ENCODE measurements at regions of chr7 and their contacts with region 1.

Region 1: DNA sequence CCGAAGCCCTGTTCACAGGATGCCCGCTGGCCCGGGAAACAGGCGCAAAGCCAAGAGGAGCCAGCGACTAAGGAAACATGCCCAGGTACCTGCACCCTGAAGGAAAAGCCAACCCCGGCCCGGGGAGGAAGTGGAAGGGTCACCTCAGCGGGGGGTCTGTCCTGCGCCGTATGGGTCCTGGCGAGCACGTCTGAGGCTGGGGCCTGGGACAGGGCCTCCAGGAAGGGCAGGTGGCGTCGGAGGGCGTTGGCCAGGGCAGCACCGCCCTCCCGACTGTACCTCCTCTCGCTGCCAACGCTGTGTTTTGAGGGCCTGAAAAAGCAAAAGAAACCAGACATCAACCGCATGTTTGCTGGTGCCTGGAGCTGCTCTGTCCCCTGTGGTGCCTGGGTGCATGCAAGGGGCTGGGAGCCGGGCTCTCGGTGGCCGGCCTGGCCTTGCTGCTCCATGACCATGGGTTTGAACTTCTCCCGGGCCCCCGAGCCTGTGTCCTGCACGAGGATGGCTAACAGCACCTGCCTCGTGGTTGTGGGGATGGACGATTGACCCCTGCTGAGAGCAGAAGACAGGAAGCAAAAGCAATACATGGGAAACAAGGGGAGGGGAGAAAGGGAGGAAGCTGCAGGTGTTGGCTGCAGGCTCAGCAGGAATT is 395.3 kb downstream of the PTPRN2 start:
- DNase-seq: no peak
- H3K4me3 ChIP-seq: no peak overlapping the region
- H3K27ac ChIP-seq: no peak overlapping the region
- H3K4me1 ChIP-seq: no peaks in the 10 kb centered on the region
- H3K27me3 ChIP-seq: no peaks in the 10 kb centered on the region
- CTCF ChIP-seq: no peak
- POLR2A ChIP-seq: no peak

Region 2: DNA sequence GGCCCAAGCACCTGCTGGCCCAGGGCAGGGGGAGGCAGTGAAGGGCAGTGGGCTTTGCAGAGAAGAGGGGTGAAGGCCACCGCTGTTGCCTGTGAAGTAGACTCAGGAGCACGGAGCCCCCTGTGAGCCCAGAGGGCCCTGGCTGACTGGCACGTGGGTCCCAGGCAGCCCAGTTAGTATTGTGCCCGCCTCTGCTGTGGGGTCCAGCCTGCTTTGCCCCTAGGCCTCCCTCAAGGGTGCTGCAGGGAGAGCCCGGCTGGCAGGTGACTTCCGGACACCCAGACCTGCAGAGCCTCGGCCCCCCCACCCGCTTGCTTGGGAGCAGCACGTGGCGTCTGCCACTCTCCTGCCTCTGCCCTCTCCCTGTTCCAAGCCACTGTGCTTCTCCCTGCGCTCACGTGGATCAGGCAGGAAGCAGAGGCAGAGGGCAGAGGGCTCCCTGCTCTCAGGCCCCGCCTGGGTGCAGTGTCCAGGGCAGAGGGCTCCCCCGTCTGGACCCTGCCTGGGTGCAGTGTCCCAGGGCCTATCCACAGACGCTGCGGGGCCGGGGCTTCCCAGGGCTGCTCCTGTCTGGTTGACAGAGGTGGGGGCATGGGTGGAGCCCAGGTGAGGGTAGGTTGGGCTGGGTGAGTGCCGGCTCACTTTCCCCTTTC is 767.1 kb before region 1 on chr7:
- intact Hi-C with region 1: no loop called
- DNase-seq: no peak
- H3K4me3 ChIP-seq: no peak overlapping the region
- H3K27ac ChIP-seq: no peak overlapping the region
- H3K4me1 ChIP-seq: no peaks in the 10 kb centered on the region
- H3K27me3 ChIP-seq: no peaks in the 10 kb centered on the region
- CTCF ChIP-seq: no peak
- POLR2A ChIP-seq: no peak

Region 3: DNA sequence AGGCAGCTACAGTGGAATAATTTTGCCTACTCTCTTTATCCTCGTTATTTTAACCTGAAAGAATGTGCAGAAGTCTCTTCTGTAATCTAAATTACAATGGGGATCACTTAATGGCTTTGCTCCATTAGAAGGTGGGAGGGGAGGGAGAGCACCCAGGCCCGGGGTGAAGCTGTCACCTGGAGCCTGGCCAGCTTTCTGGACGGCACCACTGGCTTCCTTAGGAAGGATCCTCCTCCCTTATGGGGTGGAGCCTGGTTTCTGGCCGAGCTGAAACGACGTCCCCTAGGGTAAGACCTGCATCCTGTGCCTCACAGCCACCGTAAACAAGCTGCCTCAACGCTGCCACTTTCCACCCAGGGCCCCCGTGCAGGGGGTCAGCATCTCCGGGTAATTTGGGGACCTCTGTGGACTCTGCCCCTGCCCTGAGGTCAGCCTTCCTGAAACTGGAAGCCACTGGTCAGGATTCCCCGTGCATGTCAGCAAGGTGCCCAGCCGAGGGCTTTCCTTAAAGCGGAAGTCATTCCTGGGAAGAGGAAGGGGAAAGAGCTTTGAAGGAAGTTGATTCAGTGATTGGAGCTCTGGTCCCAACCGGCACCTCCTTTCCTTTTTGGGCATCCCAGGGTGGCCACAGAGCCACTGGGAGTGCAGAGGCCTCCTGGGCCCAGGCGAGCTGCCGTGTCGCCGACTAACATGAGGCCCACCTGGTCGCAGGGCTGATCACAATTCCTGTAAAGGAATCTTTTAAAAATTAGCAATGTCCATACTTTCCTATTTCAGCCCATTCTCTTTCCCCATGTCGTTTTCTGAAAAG is 286.5 kb before region 1 on chr7:
- intact Hi-C with region 1: loop called (anchors 5 kb)
- DNase-seq: peak in 1 of 2 donors; percentile 20
- H3K4me3 ChIP-seq: no peak overlapping the region
- H3K27ac ChIP-seq: no peak overlapping the region
- H3K4me1 ChIP-seq: no peaks in the 10 kb centered on the region
- H3K27me3 ChIP-seq: no peaks in the 10 kb centered on the region
- CTCF ChIP-seq: no peak
- POLR2A ChIP-seq: no peak

Region 4: GRCh38 chr7:158085741-158086695 is 106.3 kb before region 1 on chr7:
- intact Hi-C with region 1: no loop called
- DNase-seq: no peak
- H3K4me3 ChIP-seq: no peak overlapping the region
- H3K27ac ChIP-seq: no peak overlapping the region
- H3K4me1 ChIP-seq: no peaks in the 10 kb centered on the region
- H3K27me3 ChIP-seq: no peaks in the 10 kb centered on the region
- CTCF ChIP-seq: no peak
- POLR2A ChIP-seq: no peak

Region 5: GRCh38 chr7:158150234-158150633 is 42.1 kb before region 1 on chr7:
- intact Hi-C with region 1: no loop called
- DNase-seq: no peak
- H3K4me3 ChIP-seq: no peak overlapping the region
- H3K27ac ChIP-seq: no peak overlapping the region
- H3K4me1 ChIP-seq: no peaks in the 10 kb centered on the region
- H3K27me3 ChIP-seq: no peaks in the 10 kb centered on the region
- CTCF ChIP-seq: no peak
- POLR2A ChIP-seq: no peak